ENCODE measurements at regions of chr9 and their contacts with region 1.

Region 1: GRCh38 chr9:131478421-131478868 is 24.3 kb upstream of the POMT1 start:
- DNase-seq: peak; percentile 47 to 51
- H3K4me3 ChIP-seq: no peak overlapping the region
- H3K27ac ChIP-seq: no peak overlapping the region
- H3K4me1 ChIP-seq: no peaks in the 10 kb centered on the region
- H3K27me3 ChIP-seq: no peaks in the 10 kb centered on the region
- CTCF ChIP-seq: peak in 4 of 6 experiments; percentile 14 to 58 (median 30)
- POLR2A ChIP-seq: no peak

Region 2: DNA sequence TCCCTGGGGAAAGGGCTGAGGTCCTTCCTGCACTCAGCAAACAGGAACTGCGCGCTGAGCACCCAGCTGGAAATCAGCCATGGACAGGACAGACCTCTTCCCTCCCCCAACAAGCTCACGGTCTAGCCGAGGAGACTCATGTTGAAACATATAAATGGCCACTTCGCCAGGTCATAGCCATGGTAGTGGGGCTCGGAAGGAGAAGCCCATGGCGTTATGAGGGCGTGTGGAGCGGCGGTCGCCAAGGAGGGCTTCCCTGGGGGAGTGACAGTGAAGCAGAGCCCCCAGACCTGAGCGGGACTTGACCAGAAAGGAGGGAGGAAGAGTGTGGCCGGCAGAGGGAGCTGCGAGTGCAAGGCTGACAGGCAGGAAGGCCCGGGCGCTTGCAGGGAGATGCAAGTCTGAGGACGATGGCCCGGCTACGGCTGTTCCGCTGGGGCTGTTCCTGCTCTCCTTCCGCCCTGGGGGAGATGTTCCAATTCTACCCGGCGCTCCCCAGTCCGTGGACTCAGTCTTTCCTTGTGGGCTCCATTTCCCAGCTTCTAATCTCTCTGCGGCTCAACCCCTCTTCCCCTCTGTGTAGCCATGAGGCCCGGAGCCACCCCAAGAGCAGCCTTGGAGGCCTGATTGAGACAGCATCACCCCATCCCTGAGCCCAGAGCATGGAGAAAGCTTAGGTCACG is 128.4 kb before region 1 on chr9:
- intact Hi-C with region 1: loop called (anchors 10 kb)
- DNase-seq: peak; percentile 90 to 94
- H3K4me3 ChIP-seq: peak overlapping the region in 1 of 3 donors; percentile 6
- H3K27ac ChIP-seq: no peak overlapping the region
- H3K4me1 ChIP-seq: peaks cover 0 to 9% of the 10 kb centered on the region in 2 donors
- H3K27me3 ChIP-seq: no peaks in the 10 kb centered on the region
- CTCF ChIP-seq: peak; percentile 70 to 94 (median 86)
- POLR2A ChIP-seq: no peak